CD4-positive, alpha-beta memory T cell (primary cell): ENCODE measurements at regions of chr20 and their contacts with region 1.

Region 1: GRCh38 chr20:2840138-2840966 is at the starts of genes PCED1A and VPS16:
- DNase-seq: peak; percentile 87 to 90 (median 89)
- H3K4me3 ChIP-seq: peak within 1 kb of the TSS; percentile 77 to 80
- H3K4me3 Mint-ChIP-seq: peak within 1 kb of the TSS; percentile 85 to 91 (median 89)
- H3K27ac ChIP-seq: peak within 1 kb of the TSS; percentile 86
- H3K27ac Mint-ChIP-seq: peak within 1 kb of the TSS; percentile 85 to 95 (median 93)
- H3K4me1 ChIP-seq: peaks cover 24% of the 10 kb centered on the region
- H3K4me1 Mint-ChIP-seq: peaks cover 22 to 35% (median 31%) of the 10 kb centered on the region in 4 donors
- H3K27me3 ChIP-seq: no peaks in the 10 kb centered on the region
- H3K27me3 Mint-ChIP-seq: no peaks in the 10 kb centered on the region
- total RNA-seq, gene PCED1A: 82.8 to 83.1 TPM
- total RNA-seq, gene VPS16: 57.2 to 61.1 TPM

Region 2: GRCh38 chr20:2651772-2652723 is 188.3 kb before region 1 on chr20 and contains the start of gene NOP56:
- CTCF ChIA-PET with region 1: no interaction called
- POLR2A ChIA-PET with region 1: interaction called, 12 read pairs
- intact Hi-C with region 1: no loop called
- DNase-seq: peak; percentile 89 to 99 (median 95)
- H3K4me3 ChIP-seq: peak within 1 kb of the TSS; percentile 85 to 88
- H3K4me3 Mint-ChIP-seq: peak within 1 kb of the TSS; percentile 90 to 92 (median 91)
- H3K27ac ChIP-seq: peak within 1 kb of the TSS; percentile 80
- H3K27ac Mint-ChIP-seq: peak within 1 kb of the TSS; percentile 89 to 94 (median 92)
- H3K4me1 ChIP-seq: peaks cover 31% of the 10 kb centered on the region
- H3K4me1 Mint-ChIP-seq: peaks cover 21 to 60% (median 29%) of the 10 kb centered on the region in 4 donors
- H3K27me3 ChIP-seq: no peaks in the 10 kb centered on the region
- H3K27me3 Mint-ChIP-seq: no peaks in the 10 kb centered on the region
- total RNA-seq, gene NOP56: 258 to 270 TPM

Region 3: GRCh38 chr20:2713285-2713684 is 127.1 kb before region 1 on chr20:
- CTCF ChIA-PET with region 1: no interaction called
- POLR2A ChIA-PET with region 1: no interaction called
- intact Hi-C with region 1: no loop called
- DNase-seq: peak in 4 of 5 donors; percentile 43 to 54 (median 49)
- H3K4me3 ChIP-seq: no peak overlapping the region
- H3K4me3 Mint-ChIP-seq: no peak overlapping the region
- H3K27ac ChIP-seq: no peak overlapping the region
- H3K27ac Mint-ChIP-seq: no peak overlapping the region
- H3K4me1 ChIP-seq: no peaks in the 10 kb centered on the region
- H3K4me1 Mint-ChIP-seq: no peaks in the 10 kb centered on the region
- H3K27me3 ChIP-seq: no peaks in the 10 kb centered on the region
- H3K27me3 Mint-ChIP-seq: no peaks in the 10 kb centered on the region

Region 4: GRCh38 chr20:2729251-2729713 is 111.1 kb before region 1 on chr20:
- CTCF ChIA-PET with region 1: no interaction called
- POLR2A ChIA-PET with region 1: interaction called, 10 read pairs
- intact Hi-C with region 1: no loop called
- DNase-seq: peak; percentile 52 to 65 (median 58)
- H3K4me3 ChIP-seq: peak overlapping the region in 1 of 2 donors; percentile 0
- H3K4me3 Mint-ChIP-seq: peak overlapping the region; percentile 59 to 86 (median 71)
- H3K27ac ChIP-seq: peak overlapping the region; percentile 33
- H3K27ac Mint-ChIP-seq: peak overlapping the region; percentile 82 to 96 (median 95)
- H3K4me1 ChIP-seq: peaks cover 26% of the 10 kb centered on the region
- H3K4me1 Mint-ChIP-seq: peaks cover 10 to 31% (median 22%) of the 10 kb centered on the region in 4 donors
- H3K27me3 ChIP-seq: no peaks in the 10 kb centered on the region
- H3K27me3 Mint-ChIP-seq: peaks cover 0 to under 1% of the 10 kb centered on the region in 2 donors

Region 5: DNA sequence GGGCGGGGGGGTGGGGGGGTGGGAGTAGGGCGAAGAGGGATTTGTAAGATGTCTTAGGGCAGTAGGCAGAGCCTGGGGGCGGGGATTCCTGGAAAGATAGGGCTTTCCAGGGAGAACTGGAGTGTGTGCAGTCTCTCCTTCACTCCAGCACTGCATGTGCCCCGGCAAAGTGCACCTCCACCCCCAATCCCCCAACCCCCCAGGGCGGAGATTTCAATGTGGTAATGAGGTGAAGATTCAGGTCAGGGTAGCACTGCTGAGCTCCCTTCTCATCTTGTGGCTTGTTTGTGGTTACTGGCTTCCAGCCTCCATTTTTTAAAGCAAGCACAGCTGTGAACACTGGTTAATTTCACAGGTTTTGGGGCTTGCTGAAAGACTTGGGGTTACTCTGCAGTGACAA is 18.3 kb before region 1 on chr20:
- CTCF ChIA-PET with region 1: no interaction called
- POLR2A ChIA-PET with region 1: interaction called, 14 read pairs
- intact Hi-C with region 1: no loop called
- DNase-seq: peak; percentile 66 to 78 (median 69)
- H3K4me3 ChIP-seq: no peak overlapping the region
- H3K4me3 Mint-ChIP-seq: peak overlapping the region in 7 of 8 donors; percentile 31 to 81 (median 74)
- H3K27ac ChIP-seq: no peak overlapping the region
- H3K27ac Mint-ChIP-seq: peak overlapping the region in 3 of 7 donors; percentile 51 to 61 (median 57)
- H3K4me1 ChIP-seq: peaks cover 25% of the 10 kb centered on the region
- H3K4me1 Mint-ChIP-seq: peaks cover 12 to 37% (median 26%) of the 10 kb centered on the region in 4 donors
- H3K27me3 ChIP-seq: peaks cover 5% of the 10 kb centered on the region
- H3K27me3 Mint-ChIP-seq: peaks cover 10 to 12% of the 10 kb centered on the region in 2 donors